Panc1 (cell line): ENCODE measurements at regions of chr13 and their contacts with region 1.

Region 1: DNA sequence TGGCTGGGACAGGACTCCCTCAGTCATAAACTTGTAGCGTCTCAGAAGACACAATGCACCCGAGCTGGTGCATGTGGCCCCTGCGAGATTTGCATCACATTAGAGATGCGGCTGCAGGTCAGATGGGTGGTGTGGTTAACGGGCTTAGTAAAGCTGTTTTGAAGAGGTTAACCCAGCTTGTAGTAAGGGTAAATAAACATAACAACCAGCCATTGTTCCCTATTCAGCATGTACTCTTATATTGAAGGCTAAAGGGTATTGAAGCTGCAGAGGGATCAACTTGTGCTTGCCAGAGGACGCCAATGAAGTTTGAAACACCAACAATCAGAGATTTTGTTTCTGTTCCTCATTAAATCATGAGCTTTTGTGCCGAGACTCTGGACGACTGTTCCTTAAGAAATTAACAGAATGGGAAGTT is 79.4 kb downstream of the ZIC5 start:
- DNase-seq: no peak
- ATAC-seq: no peak; the same call in 1 of the 2 replicates
- H3K4me3 ChIP-seq: peak overlapping the region in 1 of 2 experiments; percentile 17; a peak in 1 of 4 replicates
- H3K27ac ChIP-seq: 0 out of 2 replicates have a peak overlapping the region, but pooled peaks have one; percentile 23
- H3K4me1 ChIP-seq: no peaks in the 10 kb centered on the region; the same call in 1 of the 2 replicates
- H3K27me3 ChIP-seq: no peaks in the 10 kb centered on the region
- CTCF ChIP-seq: no peak

Region 2: GRCh38 chr13:99782669-99783068 is 109.5 kb before region 1 on chr13:
- CTCF ChIA-PET with region 1: no interaction called
- POLR2A ChIA-PET with region 1: interaction called, 18 read pairs
- in situ Hi-C with region 1: no loop called
- intact Hi-C with region 1: no loop called
- DNase-seq: no peak
- ATAC-seq: no peak
- H3K4me3 ChIP-seq: no peak overlapping the region
- H3K27ac ChIP-seq: no peak overlapping the region
- H3K4me1 ChIP-seq: no peaks in the 10 kb centered on the region
- H3K27me3 ChIP-seq: no peaks in the 10 kb centered on the region
- CTCF ChIP-seq: no peak

Region 3: GRCh38 chr13:100088644-100089464 is 196.6 kb after region 1 on chr13 and contains the start of gene PCCA:
- CTCF ChIA-PET with region 1: no interaction called
- POLR2A ChIA-PET with region 1: no interaction called
- in situ Hi-C with region 1: no loop called
- intact Hi-C with region 1: no loop called
- DNase-seq: peak; percentile 45
- ATAC-seq: peak; percentile 97
- H3K4me3 ChIP-seq: peak within 1 kb of the TSS; percentile 78 to 82
- H3K27ac ChIP-seq: peak within 1 kb of the TSS; percentile 86
- H3K4me1 ChIP-seq: peaks cover 5% of the 10 kb centered on the region
- H3K27me3 ChIP-seq: no peaks in the 10 kb centered on the region
- CTCF ChIP-seq: no peak
- total RNA-seq, gene PCCA: 14.7 TPM